H1 (cell line): ENCODE measurements at regions of chr12 and their contacts with region 1.

Region 1: DNA sequence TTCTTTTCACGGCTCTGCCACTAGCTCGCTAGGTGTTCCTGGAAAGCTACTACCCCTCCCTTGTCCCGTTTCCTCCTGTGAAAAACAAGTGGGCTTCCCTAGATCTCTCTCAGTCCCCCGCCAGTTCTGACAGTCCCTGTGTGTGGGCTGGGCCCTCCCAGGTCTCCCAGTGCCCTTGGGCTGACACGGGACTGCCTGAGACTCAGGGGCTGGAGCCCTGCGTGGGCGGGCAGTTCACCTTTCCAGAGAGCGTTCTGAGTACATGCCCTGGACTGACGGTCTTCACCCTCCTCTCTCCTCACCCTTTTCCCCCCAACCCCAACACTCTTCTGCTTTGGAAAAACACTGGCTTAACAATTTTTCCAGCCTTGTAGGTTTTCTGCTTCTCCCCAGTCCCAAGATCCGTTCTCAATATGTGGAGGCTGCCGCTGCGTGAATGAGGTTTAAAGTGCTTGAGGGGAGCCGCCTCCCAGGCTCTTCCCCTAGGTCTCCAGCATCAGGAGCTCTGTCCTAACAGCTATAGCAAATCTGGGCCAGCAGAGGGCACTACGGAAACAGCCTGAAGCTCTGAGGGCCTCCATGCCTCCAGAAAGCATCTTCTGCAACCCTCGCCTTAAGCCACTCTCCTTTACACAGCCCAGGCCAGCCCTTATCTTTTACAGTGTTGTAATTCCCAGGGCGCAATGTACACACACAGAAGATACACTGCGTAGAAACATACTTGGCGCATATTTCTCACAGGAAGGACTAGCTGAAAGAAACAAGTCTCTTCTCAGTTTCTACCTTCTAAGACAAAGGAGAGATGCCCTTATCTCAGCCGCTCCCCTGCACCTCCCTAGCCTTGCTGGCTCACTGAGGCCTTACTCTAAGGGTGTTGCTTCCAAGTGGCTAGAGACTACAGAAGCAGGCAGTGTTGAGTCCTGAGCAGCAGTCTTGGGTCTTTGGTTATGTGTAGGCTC is 10.4 kb upstream of the DCD start:
- DNase-seq: peak; percentile 53 to 87
- H3K4me3 ChIP-seq: peak overlapping the region in 1 of 4 experiments; percentile 7; a peak in 1 of 8 replicates
- H3K27ac ChIP-seq: no peak overlapping the region
- H3K4me1 ChIP-seq: peaks cover 0 to 6% (median 1%) of the 10 kb centered on the region in 4 experiments; a peak in 5 of 7 replicates
- H3K27me3 ChIP-seq: peaks cover 0 to 2% (median 0%) of the 10 kb centered on the region in 4 experiments; a peak in 3 of 7 replicates
- CTCF ChIP-seq: peak; percentile 76 to 95 (median 88)
- EP300 ChIP-seq: no peak
- POLR2A ChIP-seq: no peak
- RAD21 ChIP-seq: peak; percentile 76 to 84

Region 2: DNA sequence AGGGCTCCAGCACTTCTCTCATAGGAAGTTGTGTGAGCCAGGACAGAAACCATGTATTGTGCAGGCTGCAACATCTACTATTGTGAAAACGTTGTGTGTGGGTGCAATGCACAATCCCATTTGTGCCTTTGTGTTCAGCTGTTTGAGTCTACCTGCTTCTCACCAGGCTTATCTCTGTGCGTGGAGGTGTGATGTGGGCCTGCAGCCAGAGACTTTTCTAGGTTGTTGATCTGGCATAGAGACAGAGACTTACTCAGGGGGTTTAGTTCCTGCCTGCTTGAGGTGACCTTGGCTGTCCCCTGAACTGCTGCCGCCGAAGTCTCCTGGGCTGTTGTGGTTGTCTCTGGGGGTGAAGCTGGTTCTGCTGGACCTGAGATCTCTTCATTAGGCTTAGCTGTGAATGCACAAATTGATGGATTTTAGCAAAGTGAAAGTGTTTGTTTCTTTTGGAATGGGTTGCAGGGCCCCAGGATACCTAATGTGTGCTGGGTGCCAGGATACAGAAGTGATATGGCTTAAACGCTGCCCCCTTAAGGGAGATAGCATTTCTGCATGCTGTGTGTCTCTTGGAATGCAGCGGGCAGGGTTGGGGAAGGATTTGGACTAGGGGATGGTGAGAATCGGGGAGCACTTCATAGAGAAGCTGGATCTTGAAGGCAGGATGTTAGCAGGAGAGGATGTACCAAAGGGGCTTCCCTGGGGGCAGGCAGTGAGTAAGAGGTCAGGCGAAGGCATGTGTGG is 26.4 kb before region 1 on chr12:
- CTCF ChIA-PET with region 1: interaction called, 17 read pairs
- POLR2A ChIA-PET with region 1: no interaction called
- DNase-seq: peak in 1 of 2 experiments; percentile 50
- H3K4me3 ChIP-seq: no peak overlapping the region
- H3K27ac ChIP-seq: no peak overlapping the region
- H3K4me1 ChIP-seq: peaks cover 0 to 3% (median 0%) of the 10 kb centered on the region in 4 experiments; a peak in 2 of 7 replicates
- H3K27me3 ChIP-seq: no peaks in the 10 kb centered on the region
- CTCF ChIP-seq: peak; percentile 51 to 73 (median 56); a peak in 3 of 4 replicates
- EP300 ChIP-seq: no peak
- POLR2A ChIP-seq: no peak
- RAD21 ChIP-seq: peak in 1 of 2 experiments; percentile 36; a peak in 1 of 4 replicates

Region 3: DNA sequence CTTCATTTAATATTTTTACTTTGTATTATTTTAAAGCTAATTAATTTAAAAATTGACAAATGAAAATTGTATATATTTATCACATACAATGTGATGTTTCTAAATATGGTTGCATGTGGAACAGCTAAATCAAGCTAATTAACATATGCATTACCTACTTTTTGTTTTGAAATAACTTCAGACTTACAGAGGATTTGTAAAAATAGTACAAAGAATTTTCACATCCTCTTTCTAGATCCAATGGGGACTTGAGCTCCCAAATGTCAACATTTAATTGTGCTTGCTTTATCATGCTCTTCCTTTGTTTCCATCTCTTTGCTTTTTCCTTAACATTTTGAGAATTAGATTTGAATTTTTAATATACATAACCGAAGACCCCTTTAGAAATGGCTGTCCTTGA is 17.0 kb before region 1 on chr12:
- CTCF ChIA-PET with region 1: interaction called, 60 read pairs
- POLR2A ChIA-PET with region 1: no interaction called
- DNase-seq: no peak
- H3K4me3 ChIP-seq: no peak overlapping the region
- H3K27ac ChIP-seq: no peak overlapping the region
- H3K4me1 ChIP-seq: no peaks in the 10 kb centered on the region
- H3K27me3 ChIP-seq: no peaks in the 10 kb centered on the region
- CTCF ChIP-seq: no peak
- EP300 ChIP-seq: no peak
- POLR2A ChIP-seq: no peak
- RAD21 ChIP-seq: no peak

Region 4: DNA sequence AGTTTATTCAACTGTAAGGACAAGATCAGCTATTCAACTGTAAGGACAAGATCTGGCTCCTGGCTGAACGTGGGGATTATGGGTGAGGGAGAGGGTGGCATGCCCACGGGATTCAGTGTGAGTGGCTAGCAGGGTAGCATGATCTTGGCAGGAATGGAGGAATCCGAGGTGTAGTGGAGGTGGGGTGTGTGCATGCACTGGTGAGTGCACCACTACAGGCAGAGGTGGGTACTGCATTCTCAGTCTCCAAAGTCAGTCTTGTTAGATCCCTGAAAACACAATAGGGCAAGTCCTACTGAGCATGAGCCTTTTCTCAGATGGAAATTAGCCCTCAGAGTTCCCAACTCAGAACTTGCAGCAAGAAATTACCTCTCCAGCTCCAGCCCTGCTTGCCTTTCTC is 21.8 kb after region 1 on chr12:
- CTCF ChIA-PET with region 1: interaction called, 88 read pairs
- POLR2A ChIA-PET with region 1: no interaction called
- DNase-seq: peak; percentile 25 to 90
- H3K4me3 ChIP-seq: no peak overlapping the region
- H3K27ac ChIP-seq: no peak overlapping the region
- H3K4me1 ChIP-seq: peaks cover 12 to 23% (median 20%) of the 10 kb centered on the region in 4 experiments
- H3K27me3 ChIP-seq: no peaks in the 10 kb centered on the region; a peak in 1 of 7 replicates
- CTCF ChIP-seq: peak; percentile 46 to 92 (median 83)
- EP300 ChIP-seq: no peak
- POLR2A ChIP-seq: no peak
- RAD21 ChIP-seq: peak; percentile 21 to 37; a peak in 3 of 4 replicates

Region 5: GRCh38 chr12:54689984-54690383 is 31.4 kb after region 1 on chr12:
- CTCF ChIA-PET with region 1: interaction called, 17 read pairs
- POLR2A ChIA-PET with region 1: no interaction called
- DNase-seq: peak in 1 of 2 experiments; percentile 25
- H3K4me3 ChIP-seq: no peak overlapping the region
- H3K27ac ChIP-seq: no peak overlapping the region
- H3K4me1 ChIP-seq: peaks cover 0 to 1% (median under 1%) of the 10 kb centered on the region in 4 experiments; a peak in 3 of 7 replicates
- H3K27me3 ChIP-seq: no peaks in the 10 kb centered on the region; a peak in 1 of 7 replicates
- CTCF ChIP-seq: peak; percentile 33 to 83 (median 66)
- EP300 ChIP-seq: no peak
- POLR2A ChIP-seq: no peak
- RAD21 ChIP-seq: peak; percentile 40 to 52

Region 6: DNA sequence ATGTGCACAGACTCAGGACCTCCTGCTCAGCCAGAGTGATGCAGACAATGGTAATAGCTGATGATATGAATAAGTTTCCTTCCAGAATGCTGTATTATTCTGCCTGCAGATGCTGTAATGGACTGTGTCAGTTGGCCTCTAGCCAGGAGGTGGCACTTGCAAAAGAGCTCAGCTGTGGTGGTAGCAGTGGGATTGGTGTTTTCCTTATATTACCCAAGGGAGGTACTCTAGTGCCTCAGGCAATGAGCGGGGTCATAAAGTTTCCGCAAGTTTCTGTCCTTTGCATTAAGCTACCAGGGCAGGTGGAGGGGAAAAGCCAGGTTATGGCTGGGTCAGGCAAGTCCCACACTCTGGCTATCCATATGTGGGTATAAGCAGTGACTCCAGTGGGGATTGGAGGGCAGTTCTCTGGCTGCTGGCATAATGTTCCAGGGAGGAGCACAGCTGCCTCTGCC is 181.8 kb after region 1 on chr12:
- CTCF ChIA-PET with region 1: no interaction called
- POLR2A ChIA-PET with region 1: no interaction called
- DNase-seq: no peak
- H3K4me3 ChIP-seq: no peak overlapping the region
- H3K27ac ChIP-seq: no peak overlapping the region
- H3K4me1 ChIP-seq: no peaks in the 10 kb centered on the region
- H3K27me3 ChIP-seq: no peaks in the 10 kb centered on the region
- CTCF ChIP-seq: no peak
- EP300 ChIP-seq: no peak
- POLR2A ChIP-seq: no peak
- RAD21 ChIP-seq: no peak